ENCODE measurements at regions of chr3 and their contacts with region 1.

Region 1: DNA sequence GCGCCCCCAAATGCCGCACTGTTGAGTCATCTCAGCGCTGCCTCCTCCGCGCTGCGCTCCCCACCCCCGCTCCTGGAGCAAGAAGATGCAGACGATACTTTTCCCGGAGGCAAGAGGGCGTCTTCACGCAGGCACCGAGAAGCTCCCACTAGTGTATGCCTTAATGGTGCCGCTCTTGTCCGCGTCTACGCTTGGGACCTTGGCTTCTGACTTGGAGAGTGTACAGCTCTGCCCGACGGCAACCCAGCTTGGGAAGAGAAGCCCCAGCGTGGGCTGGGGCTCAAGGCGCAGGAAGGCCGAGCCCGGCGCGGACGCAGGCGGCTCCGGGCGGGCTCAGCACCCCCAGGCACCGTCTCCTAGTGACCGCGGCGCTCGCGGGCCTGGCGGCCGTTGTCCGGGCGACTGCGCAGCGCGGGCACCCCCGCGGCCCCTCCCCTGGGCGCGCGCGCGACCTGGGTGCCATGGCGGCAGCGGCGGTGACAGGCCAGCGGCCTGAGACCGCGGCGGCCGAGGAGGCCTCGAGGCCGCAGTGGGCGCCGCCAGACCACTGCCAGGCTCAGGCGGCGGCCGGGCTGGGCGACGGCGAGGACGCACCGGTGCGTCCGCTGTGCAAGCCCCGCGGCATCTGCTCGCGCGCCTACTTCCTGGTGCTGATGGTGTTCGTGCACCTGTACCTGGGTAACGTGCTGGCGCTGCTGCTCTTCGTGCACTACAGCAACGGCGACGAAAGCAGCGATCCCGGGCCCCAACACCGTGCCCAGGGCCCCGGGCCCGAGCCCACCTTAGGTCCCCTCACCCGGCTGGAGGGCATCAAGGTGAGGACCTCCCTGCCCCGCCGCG is at the start of gene P4HTM:
- DNase-seq: peak; percentile 90
- ATAC-seq: peak; percentile 76
- H3K4me3 Mint-ChIP-seq: peak within 1 kb of the TSS; percentile 95
- H3K27ac Mint-ChIP-seq: peak within 1 kb of the TSS; percentile 93
- H3K4me1 Mint-ChIP-seq: peaks cover 35% of the 10 kb centered on the region
- H3K27me3 Mint-ChIP-seq: no peaks in the 10 kb centered on the region
- total RNA-seq, gene P4HTM: 25.7 to 30.4 TPM

Region 2: GRCh38 chr3:48415554-48415953 is 574.5 kb before region 1 on chr3:
- CTCF ChIA-PET with region 1: no interaction called
- POLR2A ChIA-PET with region 1: no interaction called
- intact Hi-C with region 1: no loop called
- DNase-seq: no peak
- ATAC-seq: no peak
- H3K4me3 Mint-ChIP-seq: no peak overlapping the region
- H3K27ac Mint-ChIP-seq: no peak overlapping the region
- H3K4me1 Mint-ChIP-seq: no peaks in the 10 kb centered on the region
- H3K27me3 Mint-ChIP-seq: no peaks in the 10 kb centered on the region

Region 3: GRCh38 chr3:48556793-48557626 is 433.0 kb before region 1 on chr3 and contains the start of gene PFKFB4:
- CTCF ChIA-PET with region 1: no interaction called
- POLR2A ChIA-PET with region 1: no interaction called
- intact Hi-C with region 1: no loop called
- DNase-seq: peak; percentile 100
- ATAC-seq: peak; percentile 91
- H3K4me3 Mint-ChIP-seq: peak within 1 kb of the TSS; percentile 87
- H3K27ac Mint-ChIP-seq: peak within 1 kb of the TSS; percentile 93
- H3K4me1 Mint-ChIP-seq: peaks cover 23% of the 10 kb centered on the region
- H3K27me3 Mint-ChIP-seq: no peaks in the 10 kb centered on the region
- total RNA-seq, gene PFKFB4: 58.4 to 63.7 TPM

Region 4: GRCh38 chr3:49028673-49029562 is 38.9 kb after region 1 on chr3 and contains the start of gene IMPDH2:
- CTCF ChIA-PET with region 1: interaction called, 43 read pairs
- POLR2A ChIA-PET with region 1: interaction called, 6 read pairs
- intact Hi-C with region 1: loop called in 1 of 2 experiments (anchors 1 kb)
- DNase-seq: peak; percentile 96
- ATAC-seq: peak; percentile 93
- H3K4me3 Mint-ChIP-seq: peak within 1 kb of the TSS; percentile 89
- H3K27ac Mint-ChIP-seq: peak within 1 kb of the TSS; percentile 97
- H3K4me1 Mint-ChIP-seq: peaks cover 53% of the 10 kb centered on the region
- H3K27me3 Mint-ChIP-seq: no peaks in the 10 kb centered on the region
- total RNA-seq, gene IMPDH2: 504 to 515 TPM

Region 5: DNA sequence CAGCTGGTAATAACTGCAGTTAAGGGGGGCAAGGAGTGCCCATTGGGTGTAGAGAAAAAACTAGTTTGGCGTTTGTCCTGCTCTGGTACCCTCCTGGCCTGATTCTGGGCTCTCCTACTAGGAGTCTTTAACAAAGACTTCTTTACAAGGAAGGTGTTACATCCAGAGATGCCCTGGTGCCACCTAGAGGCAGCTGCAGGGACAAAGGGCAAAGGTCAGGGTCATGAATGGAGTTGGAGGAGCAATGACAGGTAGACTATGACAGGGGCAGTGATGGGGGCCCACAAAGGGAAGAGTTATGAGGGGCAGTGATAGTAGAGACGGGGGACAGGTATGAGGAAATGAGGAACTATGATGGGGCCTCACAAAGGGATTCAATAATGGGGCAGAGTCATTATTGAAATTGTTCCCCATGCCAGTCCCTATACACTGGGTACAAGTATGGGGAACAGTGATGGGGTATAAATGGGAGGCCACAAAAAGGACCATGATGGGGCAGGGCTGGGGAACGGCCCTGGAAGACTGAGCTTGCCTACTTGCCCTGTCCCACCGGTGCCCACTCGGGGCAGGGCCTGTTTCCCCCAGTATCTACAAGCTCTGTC is 168.2 kb after region 1 on chr3:
- CTCF ChIA-PET with region 1: interaction called, 7 read pairs
- POLR2A ChIA-PET with region 1: no interaction called
- intact Hi-C with region 1: loop called (anchors 1 kb)
- DNase-seq: peak; percentile 81
- ATAC-seq: peak; percentile 82
- H3K4me3 Mint-ChIP-seq: no peak overlapping the region
- H3K27ac Mint-ChIP-seq: no peak overlapping the region
- H3K4me1 Mint-ChIP-seq: peaks cover 14% of the 10 kb centered on the region
- H3K27me3 Mint-ChIP-seq: no peaks in the 10 kb centered on the region

Measured in activated CD4-positive, alpha-beta T cell treated with anti-CD3 and anti-CD28 coated beads for 36 hours (primary cell).